ENCODE measurements at regions of chr1 and their contacts with region 1.

Region 1: GRCh38 chr1:45018599-45019230 is 6.7 kb downstream of the UROD start:
- DNase-seq: peak; percentile 67
- ATAC-seq: peak; percentile 67
- H3K4me3 ChIP-seq: no peak overlapping the region
- H3K4me3 Mint-ChIP-seq: no peak overlapping the region
- H3K27ac ChIP-seq: no peak overlapping the region
- H3K27ac Mint-ChIP-seq: no peak overlapping the region
- H3K4me1 ChIP-seq: peaks cover 0 to 6% of the 10 kb centered on the region in 2 donors
- H3K4me1 Mint-ChIP-seq: peaks cover 13% of the 10 kb centered on the region
- H3K27me3 ChIP-seq: no peaks in the 10 kb centered on the region
- H3K27me3 Mint-ChIP-seq: no peaks in the 10 kb centered on the region
- CTCF ChIP-seq: peak; percentile 73

Region 2: DNA sequence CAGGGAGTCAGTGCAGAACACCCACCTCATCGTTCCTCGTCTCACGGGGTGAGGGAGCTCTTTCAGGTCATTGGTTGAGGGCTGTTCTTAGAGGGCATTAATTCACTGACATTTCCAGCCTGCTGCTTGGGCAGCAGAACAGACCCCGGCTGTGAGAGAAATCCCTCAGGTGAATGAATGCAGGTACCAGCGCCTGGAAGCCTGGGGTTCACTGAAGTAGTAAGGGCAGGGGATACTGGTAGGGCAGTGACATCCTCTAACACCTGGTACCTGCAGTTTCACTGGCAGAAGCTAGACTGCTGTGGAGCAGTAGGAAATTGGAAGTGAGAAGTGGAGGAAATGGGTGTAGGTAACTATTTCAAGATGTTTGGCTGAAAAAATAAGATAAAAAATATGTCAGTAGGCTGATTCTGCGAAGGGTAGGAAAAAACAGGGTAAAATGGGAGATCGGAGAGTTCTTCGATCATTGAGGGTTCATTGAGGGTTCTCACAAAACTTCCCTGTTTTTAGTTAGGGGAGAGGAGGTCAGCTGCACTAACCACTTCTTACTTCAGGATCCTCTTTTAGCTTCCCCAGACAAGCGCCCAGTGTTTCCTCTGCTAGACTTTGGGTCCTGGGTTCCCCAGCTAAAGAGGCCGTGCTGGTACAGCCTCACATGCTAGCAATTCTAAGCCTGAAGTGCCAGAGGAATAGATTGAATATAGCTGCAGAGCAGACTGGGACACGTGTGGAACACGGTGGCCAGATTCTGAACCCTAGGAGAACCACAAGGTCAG is 558.4 kb before region 1 on chr1:
- CTCF ChIA-PET with region 1: no interaction called
- POLR2A ChIA-PET with region 1: no interaction called
- intact Hi-C with region 1: no loop called
- DNase-seq: no peak
- ATAC-seq: no peak
- H3K4me3 ChIP-seq: no peak overlapping the region
- H3K4me3 Mint-ChIP-seq: no peak overlapping the region
- H3K27ac ChIP-seq: no peak overlapping the region
- H3K27ac Mint-ChIP-seq: no peak overlapping the region
- H3K4me1 ChIP-seq: peaks cover 0 to 2% of the 10 kb centered on the region in 2 donors
- H3K4me1 Mint-ChIP-seq: peaks cover 2% of the 10 kb centered on the region
- H3K27me3 ChIP-seq: peaks cover 0 to 8% (median 3%) of the 10 kb centered on the region in 4 experiments
- H3K27me3 Mint-ChIP-seq: peaks cover 42% of the 10 kb centered on the region
- CTCF ChIP-seq: no peak

Region 3: DNA sequence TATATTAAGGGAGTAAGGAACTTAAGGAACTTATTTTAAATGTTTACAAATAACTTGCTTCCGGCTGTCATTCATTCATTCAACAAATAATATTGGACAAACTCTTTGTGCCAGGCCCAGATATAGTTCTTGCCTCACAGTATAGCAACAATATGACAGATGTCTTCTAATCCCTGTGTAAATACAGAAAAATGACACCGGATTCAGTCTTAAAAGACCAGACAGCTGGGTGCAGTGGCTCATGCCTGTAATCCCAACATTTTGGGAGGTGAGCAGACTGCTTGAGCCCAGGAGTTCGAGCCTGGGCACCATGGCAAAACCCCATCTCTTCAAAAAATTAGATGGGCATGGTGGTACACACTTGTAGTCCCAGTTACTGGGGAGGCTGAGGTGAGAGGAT is 56.0 kb before region 1 on chr1:
- CTCF ChIA-PET with region 1: no interaction called
- POLR2A ChIA-PET with region 1: no interaction called
- intact Hi-C with region 1: no loop called
- DNase-seq: no peak
- ATAC-seq: no peak
- H3K4me3 ChIP-seq: no peak overlapping the region
- H3K4me3 Mint-ChIP-seq: no peak overlapping the region
- H3K27ac ChIP-seq: no peak overlapping the region
- H3K27ac Mint-ChIP-seq: no peak overlapping the region
- H3K4me1 ChIP-seq: no peaks in the 10 kb centered on the region
- H3K4me1 Mint-ChIP-seq: no peaks in the 10 kb centered on the region
- H3K27me3 ChIP-seq: no peaks in the 10 kb centered on the region
- H3K27me3 Mint-ChIP-seq: no peaks in the 10 kb centered on the region
- CTCF ChIP-seq: no peak

Region 4: GRCh38 chr1:45033356-45033755 is 14.6 kb after region 1 on chr1:
- CTCF ChIA-PET with region 1: interaction called, 10 read pairs
- POLR2A ChIA-PET with region 1: no interaction called
- intact Hi-C with region 1: no loop called
- DNase-seq: peak; percentile 38
- ATAC-seq: peak; percentile 51
- H3K4me3 ChIP-seq: no peak overlapping the region
- H3K4me3 Mint-ChIP-seq: no peak overlapping the region
- H3K27ac ChIP-seq: peak overlapping the region; percentile 28 to 52
- H3K27ac Mint-ChIP-seq: peak overlapping the region; percentile 67
- H3K4me1 ChIP-seq: peaks cover 11% of the 10 kb centered on the region in 2 donors
- H3K4me1 Mint-ChIP-seq: peaks cover 12% of the 10 kb centered on the region
- H3K27me3 ChIP-seq: no peaks in the 10 kb centered on the region
- H3K27me3 Mint-ChIP-seq: no peaks in the 10 kb centered on the region
- CTCF ChIP-seq: no peak